ENCODE measurements at regions of chr20 and their contacts with region 1.

Region 1: DNA sequence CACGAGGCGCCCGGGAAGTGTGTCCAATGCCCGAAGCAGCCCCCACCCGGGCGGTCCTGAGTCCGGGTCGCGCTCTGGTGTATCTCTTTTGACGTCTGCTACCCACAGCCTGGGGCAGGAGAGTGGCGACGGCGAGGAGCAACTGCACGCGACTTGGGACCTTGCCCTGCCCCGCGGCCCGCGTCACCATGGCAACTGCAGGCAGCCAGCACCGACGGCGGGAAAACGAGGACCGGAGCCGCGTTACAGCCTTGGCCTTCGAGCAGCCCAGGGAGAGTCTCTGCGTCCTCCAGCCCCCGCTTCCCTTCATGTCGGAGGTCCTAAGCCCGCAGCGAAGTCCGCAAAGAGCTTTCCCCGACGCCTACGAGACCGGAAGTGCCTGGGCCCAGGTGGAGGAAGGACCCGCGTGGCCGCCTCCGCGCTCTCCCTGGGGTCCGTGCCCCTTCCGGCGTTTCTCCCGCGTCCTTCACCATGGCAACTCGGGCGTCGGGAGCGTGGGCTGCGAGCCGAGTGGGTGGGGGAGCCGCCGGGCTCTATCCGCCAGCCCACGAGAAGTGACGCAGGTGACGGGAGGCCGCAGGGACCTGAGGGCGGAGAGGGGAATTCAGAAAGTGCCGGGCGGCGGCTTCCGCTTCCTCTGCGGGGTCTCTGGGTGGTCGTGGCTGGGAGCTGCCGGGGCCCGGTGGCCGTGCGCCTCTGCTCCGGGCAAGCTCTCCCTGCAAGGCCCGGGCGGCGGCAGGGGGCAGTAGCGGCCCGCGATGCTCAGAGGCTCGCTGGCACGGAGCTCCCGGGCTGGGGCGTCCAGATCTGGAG is 88.6 kb upstream of the TGM3 start:
- DNase-seq: peak; percentile 53
- H3K4me3 ChIP-seq: peak overlapping the region; percentile 2 to 41 (median 37)
- H3K27ac ChIP-seq: no peak overlapping the region
- H3K4me1 ChIP-seq: peaks cover 5% of the 10 kb centered on the region
- H3K27me3 ChIP-seq: peaks cover 4 to 5% of the 10 kb centered on the region in 2 experiments
- CTCF ChIP-seq: peak; percentile 76 to 88
- POLR2A ChIP-seq: no peak

Region 2: GRCh38 chr20:2172305-2173175 is 34.6 kb before region 1 on chr20:
- CTCF ChIA-PET with region 1: interaction called, 12 read pairs
- POLR2A ChIA-PET with region 1: no interaction called
- dilution Hi-C with region 1: no loop called
- intact Hi-C with region 1: no loop called
- DNase-seq: peak; percentile 54
- H3K4me3 ChIP-seq: no peak overlapping the region
- H3K27ac ChIP-seq: no peak overlapping the region
- H3K4me1 ChIP-seq: no peaks in the 10 kb centered on the region
- H3K27me3 ChIP-seq: peaks cover 0 to 8% of the 10 kb centered on the region in 2 experiments
- CTCF ChIP-seq: peak; percentile 88 to 90
- POLR2A ChIP-seq: no peak

Region 3: DNA sequence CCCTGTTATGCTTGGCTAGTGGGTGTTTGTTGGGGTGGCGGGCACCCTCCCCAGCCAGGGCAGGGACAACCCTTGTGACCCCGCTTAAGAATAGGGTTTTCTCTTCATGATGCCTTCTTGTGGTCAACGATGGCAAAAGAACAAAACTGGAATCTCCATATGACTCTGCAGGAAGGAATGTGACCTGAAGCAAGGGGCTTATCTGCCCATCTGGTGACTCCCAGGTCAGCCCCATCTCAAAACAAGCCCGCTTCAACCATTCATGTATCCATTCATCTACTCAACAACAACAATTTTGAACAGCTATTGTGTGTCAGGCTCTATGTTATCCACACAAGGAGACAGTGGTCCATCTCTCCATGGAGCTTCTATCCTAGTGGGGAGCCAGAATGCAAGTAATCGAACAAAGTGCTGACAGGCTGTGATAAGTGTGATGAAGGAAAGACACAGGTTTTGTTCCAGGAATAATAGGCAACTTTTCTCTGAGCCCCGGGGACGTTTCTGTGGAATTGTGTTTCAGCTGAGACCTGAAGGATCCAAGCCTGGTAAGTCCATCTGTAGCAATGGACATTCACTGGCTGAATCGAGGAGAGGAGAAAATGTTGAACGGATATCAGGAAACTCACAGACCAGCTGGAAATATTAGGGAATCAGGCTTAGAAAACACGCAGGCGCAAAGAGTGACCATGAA is 142.8 kb after region 1 on chr20:
- CTCF ChIA-PET with region 1: interaction called, 51 read pairs
- POLR2A ChIA-PET with region 1: no interaction called
- dilution Hi-C with region 1: no loop called
- intact Hi-C with region 1: loop called (anchors 1 kb)
- DNase-seq: no peak
- H3K4me3 ChIP-seq: no peak overlapping the region
- H3K27ac ChIP-seq: no peak overlapping the region
- H3K4me1 ChIP-seq: peaks cover 2% of the 10 kb centered on the region
- H3K27me3 ChIP-seq: peaks cover 2 to 17% of the 10 kb centered on the region in 2 experiments
- CTCF ChIP-seq: no peak
- POLR2A ChIP-seq: no peak

Region 4: DNA sequence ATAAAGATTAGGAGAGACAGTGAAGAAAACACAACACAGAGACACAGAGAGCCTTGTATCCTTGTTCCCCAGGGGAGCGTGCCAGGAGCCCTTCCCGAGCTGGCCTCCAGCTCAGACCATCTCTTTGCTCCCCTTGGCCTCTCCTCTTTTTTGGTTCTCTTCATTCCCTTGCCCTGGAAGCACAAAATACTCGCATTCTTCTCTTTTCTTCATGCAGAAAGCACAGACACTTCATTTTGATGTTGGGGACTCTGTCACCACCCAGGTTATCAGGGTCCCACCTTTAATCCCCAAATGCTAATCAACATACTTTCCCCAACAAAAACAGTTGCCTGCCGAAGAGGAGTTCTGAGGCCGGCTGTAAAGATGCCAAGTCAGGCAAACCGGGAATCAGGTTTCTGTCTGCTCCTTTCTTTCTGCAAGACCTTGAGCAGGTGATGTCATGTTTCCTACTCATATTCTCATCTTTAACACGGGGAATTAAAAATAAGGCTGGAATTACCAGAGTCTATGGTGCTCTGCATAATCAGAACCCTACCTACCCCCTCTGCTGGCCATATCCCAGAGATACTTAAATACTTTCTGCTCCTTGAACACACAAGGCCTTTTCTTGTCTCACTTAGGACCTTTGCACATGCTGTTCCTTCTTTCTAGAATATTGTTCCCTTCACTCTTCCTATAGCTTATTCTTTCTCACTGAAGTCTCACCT is 195.3 kb after region 1 on chr20:
- CTCF ChIA-PET with region 1: interaction called, 46 read pairs
- POLR2A ChIA-PET with region 1: no interaction called
- dilution Hi-C with region 1: no loop called
- intact Hi-C with region 1: no loop called
- DNase-seq: peak; percentile 40
- H3K4me3 ChIP-seq: no peak overlapping the region
- H3K27ac ChIP-seq: no peak overlapping the region
- H3K4me1 ChIP-seq: no peaks in the 10 kb centered on the region
- H3K27me3 ChIP-seq: no peaks in the 10 kb centered on the region
- CTCF ChIP-seq: peak; percentile 17 to 38
- POLR2A ChIP-seq: no peak

Region 5: GRCh38 chr20:2651772-2652723 is 444.9 kb after region 1 on chr20 and contains the start of gene NOP56:
- CTCF ChIA-PET with region 1: interaction called, 6 read pairs
- POLR2A ChIA-PET with region 1: no interaction called
- dilution Hi-C with region 1: no loop called
- intact Hi-C with region 1: loop called (anchors 2 kb)
- DNase-seq: peak; percentile 86
- H3K4me3 ChIP-seq: peak within 1 kb of the TSS; percentile 94 to 98 (median 96)
- H3K27ac ChIP-seq: peak within 1 kb of the TSS; percentile 51
- H3K4me1 ChIP-seq: peaks cover 25% of the 10 kb centered on the region
- H3K27me3 ChIP-seq: no peaks in the 10 kb centered on the region
- CTCF ChIP-seq: no peak
- POLR2A ChIP-seq: peak; percentile 92
- total RNA-seq, gene NOP56: 305 and 329 TPM in 2 replicates

Measured in endothelial cell of umbilical vein (primary cell).